ENCODE measurements at regions of chr4 and their contacts with region 1.

Region 1: GRCh38 chr4:189267312-189267965 is 673.2 kb upstream of the FRG1 start:
- DNase-seq: no peak
- H3K4me3 ChIP-seq: no peak overlapping the region
- H3K27ac ChIP-seq: no peak overlapping the region
- H3K4me1 ChIP-seq: no peaks in the 10 kb centered on the region
- H3K27me3 ChIP-seq: no peaks in the 10 kb centered on the region
- CTCF ChIP-seq: no peak
- EP300 ChIP-seq: no peak
- POLR2A ChIP-seq: no peak

Region 2: GRCh38 chr4:189299706-189300105 is 32.3 kb after region 1 on chr4:
- in situ Hi-C with region 1: no loop called
- intact Hi-C with region 1: loop called (anchors 1 kb)
- DNase-seq: no peak
- H3K4me3 ChIP-seq: no peak overlapping the region
- H3K27ac ChIP-seq: no peak overlapping the region
- H3K4me1 ChIP-seq: no peaks in the 10 kb centered on the region
- H3K27me3 ChIP-seq: no peaks in the 10 kb centered on the region
- CTCF ChIP-seq: no peak
- EP300 ChIP-seq: no peak
- POLR2A ChIP-seq: no peak

Region 3: DNA sequence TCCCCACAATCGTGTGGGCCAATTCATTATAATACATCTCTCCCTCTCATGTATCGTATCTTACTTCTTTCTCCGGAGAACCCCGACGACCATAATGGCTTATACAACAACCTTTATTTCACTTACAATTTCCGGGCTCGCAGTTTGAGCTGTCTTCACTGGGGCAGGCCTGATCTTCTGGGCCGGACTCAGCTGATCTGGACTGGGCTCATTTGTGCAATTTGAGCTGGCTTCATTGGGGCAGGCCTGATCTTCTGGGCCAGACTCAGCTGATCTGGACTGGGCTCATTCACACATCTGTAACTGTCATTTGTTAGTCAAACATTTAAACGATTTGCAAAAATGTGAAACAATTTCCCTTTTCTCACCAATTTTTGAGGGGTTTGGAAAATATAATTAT is 501.7 kb after region 1 on chr4:
- in situ Hi-C with region 1: no loop called
- intact Hi-C with region 1: no loop called
- DNase-seq: no peak
- H3K4me3 ChIP-seq: no peak overlapping the region
- H3K27ac ChIP-seq: no peak overlapping the region
- H3K4me1 ChIP-seq: no peaks in the 10 kb centered on the region
- H3K27me3 ChIP-seq: no peaks in the 10 kb centered on the region
- CTCF ChIP-seq: no peak
- EP300 ChIP-seq: no peak
- POLR2A ChIP-seq: no peak

Region 4: DNA sequence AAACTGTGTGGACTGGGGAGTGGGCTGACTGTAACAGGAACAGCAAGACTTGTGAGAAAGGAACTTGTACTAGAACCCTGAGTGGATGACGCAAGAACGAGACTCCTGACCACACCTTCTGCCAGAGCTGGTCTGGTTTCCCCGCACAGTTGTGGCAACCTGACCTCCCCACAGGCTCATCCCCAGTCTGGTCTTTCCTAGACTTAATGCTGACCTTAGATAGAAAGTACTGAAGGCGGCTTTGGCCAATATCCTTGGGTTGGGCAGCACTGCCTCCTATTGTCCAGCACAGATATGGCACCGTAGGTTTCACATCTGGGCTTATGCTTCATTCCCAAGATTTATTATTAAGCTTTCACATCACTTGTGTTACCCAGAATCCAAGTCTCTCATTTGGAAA is 535.4 kb after region 1 on chr4:
- in situ Hi-C with region 1: no loop called
- intact Hi-C with region 1: no loop called
- DNase-seq: no peak
- H3K4me3 ChIP-seq: no peak overlapping the region
- H3K27ac ChIP-seq: no peak overlapping the region
- H3K4me1 ChIP-seq: no peaks in the 10 kb centered on the region
- H3K27me3 ChIP-seq: no peaks in the 10 kb centered on the region
- CTCF ChIP-seq: no peak
- EP300 ChIP-seq: no peak
- POLR2A ChIP-seq: no peak

Measured in transverse colon (tissue), 4 donors.